HCT116 (cell line): ENCODE measurements at regions of chr3 and their contacts with region 1.

Region 1: GRCh38 chr3:57007513-57008460 is 52.7 kb upstream of the SPATA12 start:
- DNase-seq: peak; percentile 54
- ATAC-seq: peak; percentile 87
- H3K4me3 ChIP-seq: peak overlapping the region; percentile 3 to 15; a peak in 3 of 4 replicates
- H3K27ac ChIP-seq: peak overlapping the region; percentile 84
- H3K4me1 ChIP-seq: peaks cover 39 to 40% of the 10 kb centered on the region in 2 experiments
- H3K27me3 ChIP-seq: no peaks in the 10 kb centered on the region
- CTCF ChIP-seq: no peak
- POLR2A ChIP-seq: no peak
- RAD21 ChIP-seq: no peak

Region 2: DNA sequence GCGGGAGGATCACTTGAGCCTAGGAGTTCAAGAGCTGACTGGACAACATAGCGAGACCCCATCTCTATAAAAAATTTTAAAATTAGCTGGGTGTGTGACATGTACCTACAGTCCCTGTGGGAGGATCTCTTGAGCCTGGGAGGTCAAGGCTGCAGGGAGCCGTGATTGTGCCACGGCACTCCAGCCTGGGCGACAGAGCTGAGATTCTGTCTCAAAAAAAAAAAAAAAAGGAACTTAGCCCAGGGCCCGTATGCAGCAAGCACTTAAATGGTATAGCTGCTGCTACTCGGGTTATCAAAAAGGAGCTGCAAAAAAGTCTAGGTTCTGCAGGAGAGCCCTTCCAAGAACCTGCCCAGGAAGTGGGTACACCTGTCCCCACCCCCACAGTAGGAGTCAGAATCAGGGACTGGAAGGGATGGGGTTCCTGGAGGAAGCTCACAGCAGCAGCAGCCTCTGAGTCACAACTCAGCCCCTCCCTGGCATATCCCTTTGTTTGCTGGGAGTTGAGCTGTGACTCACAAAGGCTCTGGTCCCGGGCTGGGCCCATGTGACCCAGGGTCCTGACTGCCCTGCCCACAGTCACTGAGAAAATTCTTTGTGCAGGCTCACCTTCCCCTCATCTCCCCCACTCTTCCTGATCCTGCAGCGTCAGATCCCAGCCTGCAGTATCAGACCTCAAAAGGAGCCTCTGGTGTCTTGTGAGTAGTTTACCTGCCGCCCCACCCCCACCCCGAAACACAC is 52.5 kb after region 1 on chr3 and contains the start of gene SPATA12:
- CTCF ChIA-PET with region 1: interaction called, 5 read pairs
- POLR2A ChIA-PET with region 1: interaction called, 3 read pairs
- RAD21 ChIA-PET with region 1: no interaction called
- intact Hi-C with region 1: loop called (anchors 2 kb)
- DNase-seq: peak; percentile 96
- ATAC-seq: peak; percentile 94
- H3K4me3 ChIP-seq: peak within 1 kb of the TSS; percentile 25 to 54
- H3K27ac ChIP-seq: peak within 1 kb of the TSS; percentile 81
- H3K4me1 ChIP-seq: peaks cover 53 to 88% of the 10 kb centered on the region in 2 experiments
- H3K27me3 ChIP-seq: no peaks in the 10 kb centered on the region
- CTCF ChIP-seq: no peak
- POLR2A ChIP-seq: no peak
- RAD21 ChIP-seq: no peak
- total RNA-seq, gene SPATA12: 0.22 TPM

Region 3: DNA sequence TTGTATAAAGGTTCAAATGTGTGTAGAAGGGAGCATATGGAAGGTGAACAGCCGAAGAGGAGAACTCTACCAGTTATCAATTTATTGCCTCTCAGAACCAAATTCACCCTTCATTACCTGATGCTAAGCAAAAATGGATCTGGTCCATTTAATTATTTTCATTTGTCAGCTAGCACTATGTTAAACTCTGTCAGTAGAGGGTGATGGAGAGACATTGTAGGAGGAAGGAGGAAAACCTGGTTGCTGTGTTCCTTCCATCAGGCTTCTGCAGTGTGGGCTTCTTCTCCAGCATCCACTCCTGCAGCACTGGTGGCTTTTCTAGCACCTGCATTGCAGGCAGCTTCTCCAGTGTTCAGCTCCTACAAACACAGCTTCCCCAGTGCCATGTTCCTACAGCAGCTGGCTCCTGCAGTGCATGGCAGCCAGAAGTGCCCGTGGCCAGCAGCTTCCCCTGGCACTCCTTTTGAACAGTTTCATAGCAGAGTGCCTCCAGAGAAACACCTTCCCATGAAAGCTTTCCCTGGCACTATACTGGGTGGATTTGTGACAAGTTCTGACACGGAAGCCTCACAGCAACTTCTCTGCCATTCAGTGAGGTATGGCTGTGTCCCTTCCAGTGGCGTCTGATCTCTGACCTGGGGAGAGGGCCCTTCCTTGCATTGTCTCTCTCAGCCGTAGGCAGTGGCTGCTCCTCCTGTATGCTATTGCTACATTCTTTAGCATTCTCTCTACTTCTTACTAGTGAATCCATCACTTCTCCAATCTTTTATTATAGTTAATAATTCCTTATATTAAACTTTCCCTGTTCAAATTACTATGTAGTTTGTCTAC is 172.0 kb after region 1 on chr3:
- CTCF ChIA-PET with region 1: no interaction called
- POLR2A ChIA-PET with region 1: no interaction called
- RAD21 ChIA-PET with region 1: no interaction called
- intact Hi-C with region 1: no loop called
- DNase-seq: no peak
- ATAC-seq: peak; percentile 82
- H3K4me3 ChIP-seq: no peak overlapping the region
- H3K27ac ChIP-seq: no peak overlapping the region
- H3K4me1 ChIP-seq: no peaks in the 10 kb centered on the region
- H3K27me3 ChIP-seq: no peaks in the 10 kb centered on the region
- CTCF ChIP-seq: peak; percentile 42 to 52 (median 43); a peak in 5 of 6 replicates
- POLR2A ChIP-seq: no peak
- RAD21 ChIP-seq: peak; percentile 76